ENCODE measurements at regions of chr5 and their contacts with region 1.

Region 1: DNA sequence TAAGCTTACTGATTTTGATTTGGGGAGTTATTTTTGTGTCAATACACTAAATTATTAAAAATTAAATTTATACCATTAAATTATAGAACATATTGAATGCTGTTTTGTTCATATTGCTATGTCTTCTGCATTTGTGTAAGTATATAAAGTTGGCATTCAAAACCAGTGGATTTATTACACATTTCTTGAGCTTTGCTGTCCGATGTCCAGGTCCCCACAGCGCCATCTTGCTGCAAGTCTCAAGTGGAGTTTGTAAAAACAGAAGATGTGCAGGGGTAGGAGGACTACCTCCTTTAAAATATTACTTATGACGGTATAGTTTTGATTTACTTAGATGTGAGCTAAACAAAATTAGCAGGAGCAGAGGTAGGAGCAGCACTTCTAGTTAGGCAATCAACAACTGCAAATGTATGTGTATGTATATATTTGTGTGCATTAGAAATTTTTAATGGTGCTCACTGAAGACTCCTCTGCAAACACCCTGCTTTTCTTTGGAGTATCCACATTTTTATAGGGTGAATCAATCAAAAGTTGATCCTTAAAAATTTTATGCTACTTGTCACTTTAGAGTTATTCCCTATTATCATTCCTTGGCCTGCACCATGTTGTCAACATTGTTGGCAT is 37.4 kb downstream of the CPEB4 start:
- DNase-seq: peak; percentile 6 to 69 (median 48)
- ATAC-seq: peak; percentile 38
- H3K4me3 ChIP-seq: no peak overlapping the region
- H3K4me3 Mint-ChIP-seq: no peak overlapping the region
- H3K27ac ChIP-seq: no peak overlapping the region
- H3K27ac Mint-ChIP-seq: no peak overlapping the region
- H3K4me1 ChIP-seq: no peaks in the 10 kb centered on the region
- H3K4me1 Mint-ChIP-seq: peaks cover 36% of the 10 kb centered on the region
- H3K27me3 ChIP-seq: no peaks in the 10 kb centered on the region
- H3K27me3 Mint-ChIP-seq: no peaks in the 10 kb centered on the region
- CTCF ChIP-seq: peak; percentile 51

Region 2: DNA sequence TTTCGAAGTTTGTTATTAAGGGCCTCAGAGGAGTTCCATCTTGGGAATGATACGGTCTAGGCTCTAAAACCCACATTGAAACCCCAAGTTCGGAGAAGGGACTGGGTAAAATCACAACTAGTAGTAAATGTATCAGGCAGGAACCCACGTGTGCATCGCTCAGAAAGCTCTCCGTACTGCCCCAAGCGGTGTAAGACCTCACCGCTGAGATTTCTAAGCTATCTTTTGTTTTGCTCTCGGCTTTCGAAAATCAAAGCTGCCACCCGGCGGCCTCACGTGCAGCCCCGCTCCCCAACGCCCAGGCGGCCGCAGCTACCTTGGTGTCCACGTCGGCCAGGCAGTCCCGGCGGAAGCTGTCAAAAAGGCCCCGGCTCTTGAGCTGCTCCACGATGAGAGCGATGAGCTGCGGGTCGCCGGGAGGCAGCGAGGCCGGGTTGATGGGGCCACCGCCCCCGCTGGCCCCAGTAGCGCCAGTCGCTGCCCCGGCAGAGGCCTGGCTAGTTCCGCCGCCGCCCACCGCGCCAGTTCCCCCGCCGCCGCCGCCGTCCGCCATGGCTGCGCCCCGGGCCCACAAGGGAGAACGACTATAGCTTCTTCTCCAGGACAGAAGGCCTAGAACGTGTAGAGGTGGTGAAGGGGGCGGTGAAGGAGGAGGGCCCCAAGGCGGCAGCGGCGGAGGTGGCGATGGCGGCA is 309.5 kb before region 1 on chr5:
- CTCF ChIA-PET with region 1: interaction called, 18 read pairs
- POLR2A ChIA-PET with region 1: interaction called, 5 read pairs
- intact Hi-C with region 1: loop called in 1 of 2 experiments (anchors 1 kb)
- DNase-seq: peak; percentile 41 to 88 (median 70)
- ATAC-seq: peak; percentile 60
- H3K4me3 ChIP-seq: peak overlapping the region; percentile 81 to 89
- H3K4me3 Mint-ChIP-seq: peak overlapping the region; percentile 95
- H3K27ac ChIP-seq: peak overlapping the region; percentile 85 to 91
- H3K27ac Mint-ChIP-seq: peak overlapping the region; percentile 97
- H3K4me1 ChIP-seq: peaks cover 34% of the 10 kb centered on the region
- H3K4me1 Mint-ChIP-seq: peaks cover 52% of the 10 kb centered on the region
- H3K27me3 ChIP-seq: no peaks in the 10 kb centered on the region
- H3K27me3 Mint-ChIP-seq: no peaks in the 10 kb centered on the region
- CTCF ChIP-seq: peak; percentile 73

Region 3: GRCh38 chr5:173781814-173782670 is 143.5 kb before region 1 on chr5:
- CTCF ChIA-PET with region 1: no interaction called
- POLR2A ChIA-PET with region 1: no interaction called
- intact Hi-C with region 1: loop called in 1 of 2 experiments (anchors 10 kb)
- DNase-seq: peak; percentile 16 to 76 (median 69)
- ATAC-seq: peak; percentile 93
- H3K4me3 ChIP-seq: no peak overlapping the region
- H3K4me3 Mint-ChIP-seq: no peak overlapping the region
- H3K27ac ChIP-seq: no peak overlapping the region
- H3K27ac Mint-ChIP-seq: peak overlapping the region; percentile 86
- H3K4me1 ChIP-seq: peaks cover 6% of the 10 kb centered on the region
- H3K4me1 Mint-ChIP-seq: peaks cover 15% of the 10 kb centered on the region
- H3K27me3 ChIP-seq: no peaks in the 10 kb centered on the region
- H3K27me3 Mint-ChIP-seq: no peaks in the 10 kb centered on the region
- CTCF ChIP-seq: no peak

Region 4: GRCh38 chr5:174134574-174134973 is 209.0 kb after region 1 on chr5:
- CTCF ChIA-PET with region 1: no interaction called
- POLR2A ChIA-PET with region 1: no interaction called
- intact Hi-C with region 1: no loop called
- DNase-seq: no peak
- ATAC-seq: no peak
- H3K4me3 ChIP-seq: no peak overlapping the region
- H3K4me3 Mint-ChIP-seq: no peak overlapping the region
- H3K27ac ChIP-seq: no peak overlapping the region
- H3K27ac Mint-ChIP-seq: no peak overlapping the region
- H3K4me1 ChIP-seq: no peaks in the 10 kb centered on the region
- H3K4me1 Mint-ChIP-seq: no peaks in the 10 kb centered on the region
- H3K27me3 ChIP-seq: no peaks in the 10 kb centered on the region
- H3K27me3 Mint-ChIP-seq: no peaks in the 10 kb centered on the region
- CTCF ChIP-seq: no peak

Region 5: GRCh38 chr5:174464504-174465165 is 539.1 kb after region 1 on chr5:
- CTCF ChIA-PET with region 1: no interaction called
- POLR2A ChIA-PET with region 1: no interaction called
- intact Hi-C with region 1: no loop called
- DNase-seq: no peak
- ATAC-seq: no peak
- H3K4me3 ChIP-seq: no peak overlapping the region
- H3K4me3 Mint-ChIP-seq: no peak overlapping the region
- H3K27ac ChIP-seq: no peak overlapping the region
- H3K27ac Mint-ChIP-seq: no peak overlapping the region
- H3K4me1 ChIP-seq: no peaks in the 10 kb centered on the region
- H3K4me1 Mint-ChIP-seq: peaks cover 11% of the 10 kb centered on the region
- H3K27me3 ChIP-seq: no peaks in the 10 kb centered on the region
- H3K27me3 Mint-ChIP-seq: peaks cover 3% of the 10 kb centered on the region
- CTCF ChIP-seq: no peak